MCF 10A (cell line): ENCODE measurements at regions of chr5 and their contacts with region 1.

Region 1: GRCh38 chr5:131796793-131797693 is at the start of gene FNIP1:
- DNase-seq: peak; percentile 99
- H3K4me3 Mint-ChIP-seq: peak within 1 kb of the TSS; percentile 94
- H3K27ac Mint-ChIP-seq: peak within 1 kb of the TSS; percentile 94
- H3K4me1 Mint-ChIP-seq: peaks cover 14% of the 10 kb centered on the region
- H3K27me3 Mint-ChIP-seq: no peaks in the 10 kb centered on the region
- CTCF ChIP-seq: no peak
- total RNA-seq, gene FNIP1: 36.3 and 56.6 TPM in 2 replicates

Region 2: DNA sequence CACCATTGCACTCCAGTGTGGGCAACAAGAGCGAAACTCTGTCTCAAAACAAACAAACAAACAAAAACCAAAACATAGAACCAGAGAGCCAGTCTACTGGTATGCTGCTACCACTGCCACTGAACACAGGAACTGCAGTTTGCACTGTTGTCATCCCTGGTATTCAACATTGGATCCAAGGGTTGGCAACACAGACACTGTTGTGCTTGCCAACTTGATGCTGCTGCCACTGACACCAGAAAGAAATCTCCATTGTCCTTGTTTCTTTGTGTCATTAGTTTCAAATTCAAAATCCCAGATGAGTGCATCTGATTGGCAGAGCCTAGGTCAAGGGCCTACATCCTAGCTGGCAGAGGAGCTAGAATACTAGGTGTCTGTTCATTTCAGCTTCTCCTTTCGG is 648.2 kb before region 1 on chr5:
- CTCF ChIA-PET with region 1: no interaction called
- POLR2A ChIA-PET with region 1: no interaction called
- intact Hi-C with region 1: no loop called
- DNase-seq: no peak
- H3K4me3 Mint-ChIP-seq: no peak overlapping the region
- H3K27ac Mint-ChIP-seq: no peak overlapping the region
- H3K4me1 Mint-ChIP-seq: no peaks in the 10 kb centered on the region
- H3K27me3 Mint-ChIP-seq: no peaks in the 10 kb centered on the region
- CTCF ChIP-seq: no peak

Region 3: DNA sequence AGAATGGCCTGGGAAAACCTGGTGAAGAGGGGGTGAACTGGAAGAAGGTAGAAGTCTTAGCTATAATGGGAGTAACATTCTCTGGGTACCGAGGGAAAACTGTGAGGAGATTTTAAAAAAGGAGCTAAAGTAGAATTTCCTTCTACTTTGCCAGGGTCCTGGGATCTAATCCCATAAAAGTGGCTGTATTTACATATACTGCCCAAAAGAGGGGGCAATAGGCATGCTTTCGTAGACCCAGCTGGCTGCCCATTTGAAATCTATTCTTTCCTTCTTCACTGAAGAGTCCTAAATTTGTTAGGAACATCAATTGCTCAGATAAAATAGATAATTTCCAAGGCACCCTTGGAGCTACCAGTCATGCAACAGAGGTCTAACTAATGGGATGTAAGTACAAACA is 374.0 kb before region 1 on chr5:
- CTCF ChIA-PET with region 1: no interaction called
- POLR2A ChIA-PET with region 1: no interaction called
- intact Hi-C with region 1: loop called (anchors 10 kb)
- DNase-seq: peak; percentile 38
- H3K4me3 Mint-ChIP-seq: no peak overlapping the region
- H3K27ac Mint-ChIP-seq: no peak overlapping the region
- H3K4me1 Mint-ChIP-seq: no peaks in the 10 kb centered on the region
- H3K27me3 Mint-ChIP-seq: no peaks in the 10 kb centered on the region
- CTCF ChIP-seq: peak; percentile 50

Region 4: DNA sequence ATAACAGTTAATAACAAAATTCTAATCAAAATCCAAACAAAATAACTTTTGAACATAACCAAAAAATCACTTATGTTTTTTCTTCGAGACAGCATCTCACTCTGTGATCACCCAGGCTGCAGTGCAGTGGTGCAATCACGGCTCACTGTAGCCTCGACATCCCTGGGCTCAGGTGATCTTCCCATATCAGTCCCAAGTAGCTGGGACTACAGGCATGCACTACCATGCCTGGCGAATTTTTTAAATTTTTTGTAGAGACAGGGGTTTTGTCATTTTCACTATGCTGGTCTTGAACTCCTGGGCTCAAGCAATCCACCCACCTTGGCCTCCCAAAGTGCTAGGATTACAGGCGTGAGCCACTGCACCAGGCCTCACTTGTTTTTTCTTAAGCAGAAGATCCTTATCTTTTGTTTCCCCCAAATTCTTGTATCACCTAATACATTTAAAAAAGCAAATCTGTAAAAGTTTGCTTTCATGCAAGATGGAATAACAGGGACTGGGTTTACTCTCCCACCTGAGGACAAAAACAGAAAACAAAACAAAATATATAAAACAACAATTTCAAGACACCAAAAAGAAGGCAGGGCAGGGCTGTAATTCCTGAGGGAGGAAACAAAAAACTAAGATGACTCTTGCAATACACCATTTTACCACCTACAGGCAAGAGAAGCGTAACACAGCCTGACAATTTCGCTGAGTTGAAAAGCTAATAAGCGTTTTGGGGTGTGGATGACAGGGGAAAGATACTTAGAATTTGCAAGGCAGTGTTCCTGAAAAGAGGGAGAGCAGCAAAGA is 233.4 kb before region 1 on chr5:
- CTCF ChIA-PET with region 1: no interaction called
- POLR2A ChIA-PET with region 1: no interaction called
- intact Hi-C with region 1: no loop called
- DNase-seq: no peak
- H3K4me3 Mint-ChIP-seq: no peak overlapping the region
- H3K27ac Mint-ChIP-seq: no peak overlapping the region
- H3K4me1 Mint-ChIP-seq: no peaks in the 10 kb centered on the region
- H3K27me3 Mint-ChIP-seq: no peaks in the 10 kb centered on the region
- CTCF ChIP-seq: no peak

Region 5: GRCh38 chr5:131634996-131635754 is 161.9 kb before region 1 on chr5 and contains the start of gene RAPGEF6:
- CTCF ChIA-PET with region 1: no interaction called
- POLR2A ChIA-PET with region 1: interaction called, 29 read pairs
- intact Hi-C with region 1: loop called (anchors 1 kb)
- DNase-seq: peak; percentile 100
- H3K4me3 Mint-ChIP-seq: no peak within 1 kb of the TSS
- H3K27ac Mint-ChIP-seq: peak within 1 kb of the TSS; percentile 97
- H3K4me1 Mint-ChIP-seq: peaks cover 6% of the 10 kb centered on the region
- H3K27me3 Mint-ChIP-seq: no peaks in the 10 kb centered on the region
- CTCF ChIP-seq: no peak
- total RNA-seq, gene RAPGEF6: 20.5 and 23.4 TPM in 2 replicates

Region 6: DNA sequence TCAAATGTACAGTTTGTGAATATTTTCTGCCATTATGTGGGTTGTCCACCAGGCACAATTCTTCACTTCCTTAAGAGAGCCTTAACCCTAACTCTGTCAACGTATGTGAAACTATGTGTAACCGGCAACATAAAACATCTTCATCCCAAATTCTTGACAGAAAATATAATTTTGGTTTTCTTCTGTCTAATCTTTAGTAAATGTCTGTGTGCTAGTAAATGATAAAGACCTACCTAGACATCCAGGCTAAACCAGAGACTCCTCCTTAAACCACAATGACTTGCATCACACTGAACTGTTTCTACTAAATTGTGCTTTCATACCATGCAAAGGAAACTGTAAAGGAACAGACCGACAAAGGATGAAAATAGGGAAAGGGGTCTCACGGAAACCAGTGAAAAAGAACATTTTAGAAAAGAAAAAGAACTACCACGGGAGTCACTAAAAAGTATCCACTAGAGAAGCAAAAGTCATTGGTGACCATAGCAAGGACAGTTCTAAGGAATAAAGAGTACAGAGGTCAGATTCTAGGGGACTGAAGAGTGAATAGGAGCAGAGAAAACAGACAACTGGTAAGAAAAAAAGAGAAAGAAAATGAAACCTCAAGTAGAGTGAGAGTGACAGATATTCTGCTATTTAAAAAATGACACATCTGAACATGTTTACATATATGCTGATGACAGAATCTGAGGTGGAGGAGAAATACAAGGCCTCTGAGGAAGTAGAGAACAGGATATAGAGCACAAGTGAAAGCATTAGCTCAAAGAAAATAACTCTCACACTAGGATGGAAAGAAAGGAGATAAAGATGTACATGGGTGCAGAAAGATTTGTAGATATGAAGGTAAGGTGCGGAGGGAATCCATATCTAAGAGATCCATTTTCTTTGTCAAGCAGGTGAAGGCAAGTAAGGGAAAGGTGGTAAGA is 49.6 kb before region 1 on chr5:
- CTCF ChIA-PET with region 1: no interaction called
- POLR2A ChIA-PET with region 1: interaction called, 9 read pairs
- intact Hi-C with region 1: loop called (anchors 2 kb)
- DNase-seq: peak; percentile 13
- H3K4me3 Mint-ChIP-seq: no peak overlapping the region
- H3K27ac Mint-ChIP-seq: peak overlapping the region; percentile 3
- H3K4me1 Mint-ChIP-seq: peaks cover 29% of the 10 kb centered on the region
- H3K27me3 Mint-ChIP-seq: no peaks in the 10 kb centered on the region
- CTCF ChIP-seq: no peak

Region 7: GRCh38 chr5:131810510-131811249 is 13.6 kb after region 1 on chr5:
- CTCF ChIA-PET with region 1: interaction called, 5 read pairs
- POLR2A ChIA-PET with region 1: interaction called, 16 read pairs
- intact Hi-C with region 1: no loop called
- DNase-seq: peak; percentile 40
- H3K4me3 Mint-ChIP-seq: no peak overlapping the region
- H3K27ac Mint-ChIP-seq: no peak overlapping the region
- H3K4me1 Mint-ChIP-seq: peaks cover 13% of the 10 kb centered on the region
- H3K27me3 Mint-ChIP-seq: no peaks in the 10 kb centered on the region
- CTCF ChIP-seq: peak; percentile 63